Esophagus muscularis mucosa (tissue), 4 donors: ENCODE measurements at regions of chr6 and their contacts with region 1.

Region 1: GRCh38 chr6:124334359-124334758 is 530.7 kb downstream of the NKAIN2 start:
- DNase-seq: no peak
- H3K4me3 ChIP-seq: no peak overlapping the region
- H3K27ac ChIP-seq: no peak overlapping the region
- H3K4me1 ChIP-seq: no peaks in the 10 kb centered on the region
- H3K27me3 ChIP-seq: no peaks in the 10 kb centered on the region
- CTCF ChIP-seq: no peak
- EP300 ChIP-seq: no peak
- POLR2A ChIP-seq: no peak

Region 2: DNA sequence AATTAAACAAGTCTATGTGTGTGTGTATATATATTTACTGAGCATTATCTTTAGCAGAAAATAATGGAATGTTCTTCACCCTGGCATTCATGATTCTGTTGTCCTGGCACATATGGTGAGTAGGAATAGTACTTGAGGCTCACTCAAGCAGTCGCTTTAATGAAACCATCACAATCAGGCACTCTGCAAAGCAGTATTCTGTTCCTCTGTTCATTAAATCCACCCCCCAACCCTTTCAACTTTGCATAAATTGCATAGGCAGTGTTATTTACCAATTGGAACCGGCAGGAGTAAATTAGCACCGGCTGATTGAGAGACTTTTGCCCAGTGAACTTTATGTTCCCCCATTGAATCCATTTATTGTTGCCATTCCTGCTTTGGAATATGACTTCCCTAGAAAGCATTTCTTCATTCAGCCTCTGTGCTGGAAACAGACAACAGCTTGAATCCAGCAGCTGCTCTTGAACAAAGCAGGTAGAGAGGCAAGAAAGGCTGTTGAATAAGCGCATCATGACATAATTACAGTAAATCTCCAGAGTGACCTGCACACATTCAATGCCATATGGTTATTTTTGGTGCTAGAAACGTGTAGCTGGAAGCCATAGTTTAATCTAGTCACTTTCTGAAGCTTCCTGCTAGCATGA is 359.9 kb after region 1 on chr6:
- intact Hi-C with region 1: loop called (anchors 10 kb)
- DNase-seq: no peak
- H3K4me3 ChIP-seq: no peak overlapping the region
- H3K27ac ChIP-seq: no peak overlapping the region
- H3K4me1 ChIP-seq: no peaks in the 10 kb centered on the region
- H3K27me3 ChIP-seq: no peaks in the 10 kb centered on the region
- CTCF ChIP-seq: no peak
- EP300 ChIP-seq: no peak
- POLR2A ChIP-seq: no peak